GM12878 (cell line): ENCODE measurements at regions of chr2 and their contacts with region 1.

Region 1: DNA sequence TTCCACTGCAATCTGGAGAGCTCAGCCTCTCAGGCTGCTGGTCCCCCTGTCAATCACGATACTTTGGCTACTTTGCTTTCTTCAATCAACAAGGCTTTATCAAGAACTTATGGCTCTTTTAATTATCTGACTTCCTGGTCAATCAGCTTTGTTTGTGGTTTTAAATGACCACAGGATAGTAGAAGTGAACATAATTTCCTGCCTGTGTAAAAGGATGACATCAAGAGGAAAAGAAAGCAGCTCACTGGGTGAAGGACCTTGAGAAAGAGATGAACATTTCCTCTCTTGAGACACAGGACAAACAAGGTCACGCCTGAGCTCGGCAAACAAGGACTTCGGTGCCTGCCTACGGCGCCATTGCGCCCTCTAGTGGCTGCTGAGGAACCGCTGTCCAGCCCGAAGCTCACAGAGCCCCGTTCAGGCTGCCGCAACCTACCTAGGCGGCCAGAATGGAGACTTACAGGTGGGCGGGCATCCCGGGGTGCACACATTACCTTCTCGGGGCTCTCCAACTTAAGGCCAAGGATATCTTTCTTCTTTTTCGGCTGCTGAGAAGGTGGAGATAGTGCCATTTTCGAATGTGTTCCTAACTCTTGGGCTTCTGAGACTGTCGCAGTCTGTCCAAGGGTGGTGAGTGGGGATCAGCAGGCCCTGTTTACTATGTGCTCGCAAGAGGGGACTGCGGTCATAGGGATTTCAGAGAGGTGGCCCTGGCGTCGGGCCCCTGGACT is 54.0 kb downstream of the IL1RL2 start:
- DNase-seq: peak; percentile 88
- ATAC-seq: peak; percentile 96
- H3K4me3 ChIP-seq: no peak overlapping the region
- H3K27ac ChIP-seq: no peak overlapping the region
- H3K4me1 ChIP-seq: peaks cover 13% of the 10 kb centered on the region; the same call in 1 of the 2 replicates
- H3K27me3 ChIP-seq: no peaks in the 10 kb centered on the region
- CTCF ChIP-seq: peak; percentile 95 to 98 (median 97); a peak in 5 of 6 replicates
- EP300 ChIP-seq: peak; percentile 64 to 69; a peak in 3 of 4 replicates
- POLR2A ChIP-seq: no peak
- RAD21 ChIP-seq: peak; percentile 90

Region 2: DNA sequence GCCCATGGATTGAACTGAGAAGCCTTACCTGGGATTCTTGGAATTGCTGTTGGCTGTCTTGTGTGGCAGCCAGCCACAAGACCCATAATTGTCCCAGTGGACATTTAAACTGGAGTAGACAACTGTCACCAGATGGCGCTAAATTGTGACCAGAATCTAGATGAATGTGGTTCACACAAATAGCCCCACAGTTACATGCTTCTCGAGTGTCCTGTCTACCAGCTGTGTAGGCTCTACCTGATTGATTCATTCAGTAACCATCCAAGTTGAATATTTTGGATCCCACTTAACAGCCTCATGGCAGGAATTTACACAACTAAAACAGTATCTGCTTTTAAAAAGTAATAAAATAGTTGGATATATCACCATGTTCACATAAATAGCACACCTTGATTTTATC is 470.1 kb before region 1 on chr2:
- CTCF ChIA-PET with region 1: interaction called, 10 read pairs
- POLR2A ChIA-PET with region 1: no interaction called
- RAD21 ChIA-PET with region 1: interaction called, 4 read pairs
- SMC1A ChIA-PET with region 1: interaction called, 11 read pairs
- in situ Hi-C with region 1: no loop called
- intact Hi-C with region 1: no loop called
- DNase-seq: peak; percentile 30
- ATAC-seq: peak; percentile 95
- H3K4me3 ChIP-seq: no peak overlapping the region
- H3K27ac ChIP-seq: no peak overlapping the region
- H3K4me1 ChIP-seq: no peaks in the 10 kb centered on the region
- H3K27me3 ChIP-seq: no peaks in the 10 kb centered on the region
- CTCF ChIP-seq: peak; percentile 54 to 70 (median 56); a peak in 5 of 6 replicates
- EP300 ChIP-seq: no peak
- POLR2A ChIP-seq: no peak
- RAD21 ChIP-seq: peak; percentile 52

Region 3: GRCh38 chr2:102020596-102021181 is 220.1 kb before region 1 on chr2:
- CTCF ChIA-PET with region 1: interaction called, 370 read pairs
- POLR2A ChIA-PET with region 1: interaction called, 32 read pairs
- RAD21 ChIA-PET with region 1: interaction called, 114 read pairs
- SMC1A ChIA-PET with region 1: interaction called, 157 read pairs
- in situ Hi-C with region 1: loop called (anchors 5 kb)
- intact Hi-C with region 1: loop called (anchors 1 kb)
- DNase-seq: no peak
- ATAC-seq: peak; percentile 80
- H3K4me3 ChIP-seq: no peak overlapping the region
- H3K27ac ChIP-seq: no peak overlapping the region
- H3K4me1 ChIP-seq: peaks cover 7% of the 10 kb centered on the region
- H3K27me3 ChIP-seq: no peaks in the 10 kb centered on the region
- CTCF ChIP-seq: peak; percentile 93 to 98 (median 97); a peak in 5 of 6 replicates
- EP300 ChIP-seq: no peak
- POLR2A ChIP-seq: no peak
- RAD21 ChIP-seq: peak; percentile 92

Region 4: GRCh38 chr2:102074152-102074783 is 166.5 kb before region 1 on chr2:
- CTCF ChIA-PET with region 1: interaction called, 10 read pairs
- POLR2A ChIA-PET with region 1: no interaction called
- RAD21 ChIA-PET with region 1: interaction called, 12 read pairs
- SMC1A ChIA-PET with region 1: interaction called, 54 read pairs
- in situ Hi-C with region 1: no loop called
- intact Hi-C with region 1: no loop called
- DNase-seq: no peak
- ATAC-seq: peak; percentile 74
- H3K4me3 ChIP-seq: no peak overlapping the region
- H3K27ac ChIP-seq: no peak overlapping the region
- H3K4me1 ChIP-seq: 0 out of 2 replicates have a peak, but pooled peaks cover 4% of the 10 kb centered on the region
- H3K27me3 ChIP-seq: no peaks in the 10 kb centered on the region
- CTCF ChIP-seq: 0 out of 6 replicates have a peak, but pooled peaks of 2 of the 3 experiments have one; percentile 8
- EP300 ChIP-seq: no peak
- POLR2A ChIP-seq: no peak
- RAD21 ChIP-seq: no peak

Region 5: GRCh38 chr2:102155642-102156491 is 84.9 kb before region 1 on chr2:
- CTCF ChIA-PET with region 1: interaction called, 22 read pairs
- POLR2A ChIA-PET with region 1: no interaction called
- RAD21 ChIA-PET with region 1: interaction called, 8 read pairs
- SMC1A ChIA-PET with region 1: interaction called, 7 read pairs
- in situ Hi-C with region 1: no loop called
- intact Hi-C with region 1: no loop called
- DNase-seq: no peak
- ATAC-seq: no peak
- H3K4me3 ChIP-seq: no peak overlapping the region
- H3K27ac ChIP-seq: no peak overlapping the region
- H3K4me1 ChIP-seq: no peaks in the 10 kb centered on the region
- H3K27me3 ChIP-seq: no peaks in the 10 kb centered on the region
- CTCF ChIP-seq: no peak
- EP300 ChIP-seq: no peak
- POLR2A ChIP-seq: no peak
- RAD21 ChIP-seq: no peak

Region 6: GRCh38 chr2:102251042-102251848 is 10.4 kb after region 1 on chr2:
- CTCF ChIA-PET with region 1: interaction called, 33 read pairs
- POLR2A ChIA-PET with region 1: no interaction called
- RAD21 ChIA-PET with region 1: interaction called, 9 read pairs
- SMC1A ChIA-PET with region 1: interaction called, 11 read pairs
- in situ Hi-C with region 1: no loop called
- intact Hi-C with region 1: no loop called
- DNase-seq: no peak
- ATAC-seq: peak; percentile 80
- H3K4me3 ChIP-seq: no peak overlapping the region
- H3K27ac ChIP-seq: no peak overlapping the region
- H3K4me1 ChIP-seq: no peaks in the 10 kb centered on the region
- H3K27me3 ChIP-seq: no peaks in the 10 kb centered on the region; a peak in 1 of 4 replicates
- CTCF ChIP-seq: peak; percentile 58 to 63 (median 60)
- EP300 ChIP-seq: no peak
- POLR2A ChIP-seq: no peak
- RAD21 ChIP-seq: 0 out of 2 replicates have a peak, but pooled peaks have one; percentile 25

Region 7: GRCh38 chr2:102442967-102443828 is 202.4 kb after region 1 on chr2:
- CTCF ChIA-PET with region 1: interaction called, 28 read pairs
- POLR2A ChIA-PET with region 1: no interaction called
- RAD21 ChIA-PET with region 1: interaction called, 18 read pairs
- SMC1A ChIA-PET with region 1: interaction called, 15 read pairs
- in situ Hi-C with region 1: no loop called
- intact Hi-C with region 1: no loop called
- DNase-seq: no peak
- ATAC-seq: peak; percentile 93
- H3K4me3 ChIP-seq: no peak overlapping the region
- H3K27ac ChIP-seq: no peak overlapping the region
- H3K4me1 ChIP-seq: 0 out of 2 replicates have a peak, but pooled peaks cover 3% of the 10 kb centered on the region
- H3K27me3 ChIP-seq: no peaks in the 10 kb centered on the region
- CTCF ChIP-seq: peak; percentile 70 to 88 (median 86)
- EP300 ChIP-seq: no peak
- POLR2A ChIP-seq: no peak
- RAD21 ChIP-seq: peak; percentile 96

Region 8: GRCh38 chr2:102753563-102754159 is 512.9 kb after region 1 on chr2:
- CTCF ChIA-PET with region 1: no interaction called
- POLR2A ChIA-PET with region 1: no interaction called
- RAD21 ChIA-PET with region 1: no interaction called
- SMC1A ChIA-PET with region 1: no interaction called
- in situ Hi-C with region 1: no loop called
- intact Hi-C with region 1: no loop called
- DNase-seq: no peak
- ATAC-seq: peak; percentile 68
- H3K4me3 ChIP-seq: no peak overlapping the region
- H3K27ac ChIP-seq: no peak overlapping the region
- H3K4me1 ChIP-seq: peaks cover 6% of the 10 kb centered on the region
- H3K27me3 ChIP-seq: no peaks in the 10 kb centered on the region
- CTCF ChIP-seq: peak; percentile 56 to 72 (median 66)
- EP300 ChIP-seq: no peak
- POLR2A ChIP-seq: no peak
- RAD21 ChIP-seq: peak; percentile 47